A673 (cell line): ENCODE measurements at regions of chr1 and their contacts with region 1.

Region 1: GRCh38 chr1:179831852-179832699 is 45.5 kb downstream of the TOR1AIP2 start:
- DNase-seq: no peak
- H3K4me3 ChIP-seq: no peak overlapping the region
- H3K27ac ChIP-seq: no peak overlapping the region
- H3K4me1 ChIP-seq: no peaks in the 10 kb centered on the region
- H3K27me3 ChIP-seq: no peaks in the 10 kb centered on the region
- CTCF ChIP-seq: no peak

Region 2: GRCh38 chr1:179091691-179092165 is 740.3 kb before region 1 on chr1:
- CTCF ChIA-PET with region 1: no interaction called
- POLR2A ChIA-PET with region 1: no interaction called
- intact Hi-C with region 1: no loop called
- DNase-seq: no peak
- H3K4me3 ChIP-seq: no peak overlapping the region
- H3K27ac ChIP-seq: no peak overlapping the region
- H3K4me1 ChIP-seq: peaks cover 17% of the 10 kb centered on the region
- H3K27me3 ChIP-seq: no peaks in the 10 kb centered on the region
- CTCF ChIP-seq: no peak

Region 3: GRCh38 chr1:179251675-179252074 is 580.4 kb before region 1 on chr1:
- CTCF ChIA-PET with region 1: no interaction called
- POLR2A ChIA-PET with region 1: no interaction called
- intact Hi-C with region 1: no loop called
- DNase-seq: peak; percentile 48
- H3K4me3 ChIP-seq: no peak overlapping the region
- H3K27ac ChIP-seq: no peak overlapping the region
- H3K4me1 ChIP-seq: no peaks in the 10 kb centered on the region
- H3K27me3 ChIP-seq: no peaks in the 10 kb centered on the region
- CTCF ChIP-seq: peak; percentile 59

Region 4: DNA sequence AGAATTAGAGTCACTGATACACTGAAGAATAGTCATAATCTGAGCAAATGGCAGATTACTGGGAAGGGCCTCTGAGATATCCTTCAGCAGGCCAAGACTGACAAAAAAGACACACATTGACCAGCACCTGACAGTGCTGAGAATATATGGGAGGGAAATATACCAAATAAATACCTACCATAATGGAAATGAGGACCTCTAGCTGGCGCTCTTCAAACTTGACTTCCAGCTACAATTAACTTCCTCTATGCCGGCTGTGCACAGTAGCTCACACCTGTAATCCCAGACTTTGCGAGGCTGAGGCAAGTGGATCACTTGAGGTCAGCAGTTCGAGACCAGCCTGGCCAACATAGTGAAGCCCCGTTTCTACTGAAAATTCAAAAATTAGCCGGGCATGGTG is 325.9 kb before region 1 on chr1:
- CTCF ChIA-PET with region 1: no interaction called
- POLR2A ChIA-PET with region 1: no interaction called
- intact Hi-C with region 1: no loop called
- DNase-seq: no peak
- H3K4me3 ChIP-seq: no peak overlapping the region
- H3K27ac ChIP-seq: no peak overlapping the region
- H3K4me1 ChIP-seq: no peaks in the 10 kb centered on the region
- H3K27me3 ChIP-seq: peaks cover 4% of the 10 kb centered on the region
- CTCF ChIP-seq: no peak

Region 5: DNA sequence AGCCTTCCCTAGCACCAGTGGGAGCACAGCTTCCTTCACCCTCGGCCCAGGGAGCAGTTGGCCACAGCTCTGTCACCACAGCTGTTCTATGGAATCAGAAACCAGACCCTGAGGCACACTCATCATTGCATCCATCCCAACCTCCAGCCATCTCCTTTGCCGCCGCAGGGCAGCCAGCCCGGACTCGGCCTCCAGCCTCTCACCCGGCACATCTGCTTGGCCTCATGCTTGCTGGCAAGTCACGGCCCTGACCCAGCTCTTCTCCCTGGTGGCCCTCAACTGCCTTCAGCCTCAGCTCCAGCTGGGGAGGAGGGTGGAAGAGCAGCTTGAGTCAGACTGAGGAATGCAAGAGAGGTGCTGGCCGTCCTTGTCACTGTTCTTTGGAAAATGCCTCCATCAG is 14.3 kb before region 1 on chr1:
- CTCF ChIA-PET with region 1: interaction called, 15 read pairs
- POLR2A ChIA-PET with region 1: no interaction called
- intact Hi-C with region 1: no loop called
- DNase-seq: no peak
- H3K4me3 ChIP-seq: no peak overlapping the region
- H3K27ac ChIP-seq: no peak overlapping the region
- H3K4me1 ChIP-seq: no peaks in the 10 kb centered on the region
- H3K27me3 ChIP-seq: peaks cover 5% of the 10 kb centered on the region
- CTCF ChIP-seq: no peak

Region 6: DNA sequence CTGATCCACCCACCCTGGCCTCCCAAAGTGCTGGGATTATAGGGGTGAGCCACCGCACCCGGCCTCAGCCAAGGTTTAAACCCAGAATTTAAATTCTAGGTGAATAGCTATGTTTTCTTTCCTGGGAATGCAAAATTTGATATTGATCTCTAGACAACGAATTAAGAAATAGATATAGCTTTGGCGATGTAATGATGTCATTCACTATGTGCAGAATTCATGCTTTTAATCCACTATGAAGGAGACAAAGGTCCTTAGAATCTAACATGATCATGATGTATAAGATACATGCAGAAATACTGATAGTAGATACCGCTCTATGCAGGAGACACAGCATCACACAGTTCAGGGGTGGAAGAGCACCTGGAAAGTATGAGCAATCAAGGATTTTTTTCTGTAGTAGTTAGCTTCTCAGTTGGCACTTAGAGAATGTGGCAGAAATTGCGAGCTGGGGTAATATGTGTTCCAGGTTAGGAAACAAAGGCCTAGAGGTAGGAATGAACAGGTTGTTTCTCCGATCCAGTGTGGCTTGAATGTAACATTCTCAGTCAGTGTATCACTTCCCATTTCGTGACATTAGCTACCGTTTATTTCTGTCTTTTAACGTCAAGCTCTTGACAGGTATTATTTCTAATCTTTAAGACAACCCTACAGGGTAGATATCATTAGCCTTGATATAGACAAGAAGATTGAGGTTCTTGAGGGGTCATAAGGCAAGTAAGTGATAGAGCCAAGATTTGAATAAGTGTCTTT is 119.5 kb after region 1 on chr1:
- CTCF ChIA-PET with region 1: no interaction called
- POLR2A ChIA-PET with region 1: no interaction called
- intact Hi-C with region 1: no loop called
- DNase-seq: no peak
- H3K4me3 ChIP-seq: no peak overlapping the region
- H3K27ac ChIP-seq: no peak overlapping the region
- H3K4me1 ChIP-seq: peaks cover 15% of the 10 kb centered on the region
- H3K27me3 ChIP-seq: peaks cover 19% of the 10 kb centered on the region
- CTCF ChIP-seq: no peak